Prostate gland (tissue), 2 donors: ENCODE measurements at regions of chr12 and their contacts with region 1.

Region 1: GRCh38 chr12:47014474-47014873 is 64.9 kb upstream of the PCED1B start:
- DNase-seq: no peak
- H3K4me3 ChIP-seq: no peak overlapping the region
- H3K27ac ChIP-seq: no peak overlapping the region
- H3K4me1 ChIP-seq: no peaks in the 10 kb centered on the region
- H3K27me3 ChIP-seq: no peaks in the 10 kb centered on the region
- CTCF ChIP-seq: no peak
- POLR2A ChIP-seq: no peak

Region 2: GRCh38 chr12:46131729-46132469 is 882.6 kb before region 1 on chr12:
- intact Hi-C with region 1: loop called (anchors 10 kb)
- DNase-seq: no peak
- H3K4me3 ChIP-seq: no peak overlapping the region
- H3K27ac ChIP-seq: no peak overlapping the region
- H3K4me1 ChIP-seq: no peaks in the 10 kb centered on the region
- H3K27me3 ChIP-seq: no peaks in the 10 kb centered on the region
- CTCF ChIP-seq: peak in 1 of 4 experiments; percentile 7
- POLR2A ChIP-seq: no peak

Region 3: GRCh38 chr12:46686267-46686942 is 328.1 kb before region 1 on chr12:
- intact Hi-C with region 1: loop called (anchors 5 kb)
- DNase-seq: no peak
- H3K4me3 ChIP-seq: no peak overlapping the region
- H3K27ac ChIP-seq: no peak overlapping the region
- H3K4me1 ChIP-seq: no peaks in the 10 kb centered on the region
- H3K27me3 ChIP-seq: no peaks in the 10 kb centered on the region
- CTCF ChIP-seq: no peak
- POLR2A ChIP-seq: no peak